ENCODE measurements at regions of chr1 and their contacts with region 1.

Region 1: DNA sequence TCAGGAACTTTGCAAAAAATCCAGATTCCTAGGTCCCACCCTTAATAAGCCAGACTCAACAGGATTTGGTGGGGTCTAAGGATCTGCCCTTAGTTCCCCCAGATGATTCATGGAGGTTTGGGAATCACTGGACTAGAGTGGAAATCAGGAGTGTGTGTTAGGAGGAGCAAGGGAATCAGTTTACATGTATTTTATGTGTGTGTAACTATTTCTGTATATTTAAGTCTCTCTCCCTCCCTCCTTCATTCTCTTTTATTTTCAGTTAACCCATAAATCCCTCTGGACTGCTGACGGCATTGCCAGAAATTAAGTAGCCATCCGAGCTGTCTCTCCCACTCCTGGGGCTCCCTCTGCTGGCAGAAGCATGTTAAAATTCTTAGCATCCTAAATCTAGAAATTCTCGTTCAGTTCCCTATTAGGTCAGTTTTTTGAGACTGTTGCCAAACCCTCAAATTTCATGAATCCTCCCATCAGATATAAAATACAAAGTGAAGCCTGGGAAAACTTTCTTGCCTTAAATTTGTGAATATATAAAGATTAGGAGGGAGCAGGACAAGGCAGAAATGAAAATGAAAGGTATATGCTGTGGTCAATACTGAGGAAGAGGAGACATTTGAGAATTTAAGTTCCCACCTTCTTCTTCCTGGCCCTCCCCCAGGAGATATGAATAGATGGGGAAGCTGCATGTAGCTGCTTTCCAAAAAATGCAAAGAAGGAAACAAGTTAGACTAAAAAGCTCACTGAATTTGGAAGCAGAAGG is 11.7 kb upstream of the HSD11B1 start:
- DNase-seq: peak; percentile 81
- ATAC-seq: peak; percentile 36 to 67

Region 2: DNA sequence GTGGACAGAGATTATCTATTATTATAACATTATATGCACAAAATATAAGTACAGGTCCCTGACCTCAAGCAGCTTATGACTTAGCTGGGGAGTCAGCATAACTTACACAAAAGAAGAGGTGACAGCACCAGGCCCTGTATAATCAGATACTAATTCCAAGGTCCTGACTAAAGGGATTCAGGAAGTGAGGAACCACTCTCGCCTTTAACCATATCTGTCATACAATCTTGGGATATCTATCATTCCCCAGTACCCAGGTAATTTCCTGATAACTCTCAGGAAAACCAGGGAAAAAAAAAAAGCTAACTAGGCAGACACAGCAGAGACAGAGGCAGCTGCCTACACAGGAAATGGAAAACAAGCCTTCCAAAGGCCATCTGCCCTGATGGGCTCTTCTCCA is 187.9 kb before region 1 on chr1:
- intact Hi-C with region 1: no loop called
- DNase-seq: no peak
- ATAC-seq: no peak

Region 3: GRCh38 chr1:209576798-209577197 is 116.1 kb before region 1 on chr1:
- intact Hi-C with region 1: loop called in 1 of 2 experiments (anchors 1 kb)
- DNase-seq: peak; percentile 82
- ATAC-seq: peak; percentile 94 to 96

Region 4: DNA sequence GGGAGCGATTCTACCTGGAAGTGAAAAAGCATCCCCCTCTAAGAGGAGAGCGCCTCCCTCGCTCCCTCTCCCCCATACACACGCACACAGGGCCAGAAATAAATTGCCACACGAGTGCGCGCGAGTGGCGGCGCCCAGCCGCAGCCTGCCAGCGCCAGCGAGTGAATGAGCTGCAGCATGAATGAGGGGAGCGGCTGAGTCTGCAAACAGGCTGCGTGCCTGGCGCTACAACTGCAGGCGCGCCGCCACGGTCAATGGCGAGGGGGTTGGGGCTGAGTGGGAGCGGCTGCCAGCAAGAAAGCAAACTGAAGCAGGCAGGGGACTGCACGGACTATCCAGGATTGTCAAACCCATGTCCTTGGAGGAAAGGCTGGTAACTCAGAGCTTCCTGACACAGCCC is 107.3 kb before region 1 on chr1:
- intact Hi-C with region 1: loop called in 1 of 2 experiments (anchors 5 kb)
- DNase-seq: peak; percentile 54
- ATAC-seq: peak; percentile 86 to 94

Region 5: DNA sequence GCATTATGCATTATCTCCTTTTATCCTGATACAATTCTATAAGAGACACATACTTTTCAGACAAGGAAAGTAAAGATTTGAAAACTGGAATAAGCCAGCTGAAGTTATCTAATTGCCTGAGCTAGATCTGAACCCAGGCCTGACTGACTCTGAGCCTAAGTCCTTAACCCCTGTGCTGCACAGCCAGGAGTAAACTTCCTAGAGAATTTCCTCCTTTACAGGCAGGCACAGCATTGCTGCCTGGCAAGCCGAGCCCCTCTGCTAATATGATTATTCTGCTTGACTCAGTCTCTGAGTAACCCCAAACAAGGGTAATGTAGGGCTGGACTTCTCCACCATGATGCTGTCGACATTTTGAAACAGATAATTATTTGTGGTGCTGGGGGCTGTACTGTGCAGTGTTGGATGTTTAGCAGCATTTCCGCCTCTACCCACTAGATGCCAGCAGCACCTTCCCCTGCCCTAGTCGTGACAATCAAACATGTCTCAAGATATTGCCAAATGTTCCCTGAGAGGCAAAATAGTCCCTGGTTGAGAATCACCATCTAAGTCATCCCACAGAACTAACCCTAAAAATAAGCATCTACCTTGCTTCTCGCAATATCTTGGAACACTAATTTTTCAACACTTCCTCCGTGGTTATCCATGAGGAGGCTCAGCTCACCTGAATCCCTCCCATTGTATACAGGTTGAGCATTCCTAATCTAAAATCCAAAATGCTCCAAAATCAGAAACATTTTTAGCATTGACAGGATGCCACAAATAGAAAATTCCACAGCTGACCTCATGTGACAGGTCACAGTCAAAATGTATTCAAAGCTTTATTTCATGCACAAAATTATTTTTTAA is 90.9 kb before region 1 on chr1:
- intact Hi-C with region 1: loop called in 1 of 2 experiments (anchors 5 kb)
- DNase-seq: no peak
- ATAC-seq: peak; percentile 93 to 94

Region 6: DNA sequence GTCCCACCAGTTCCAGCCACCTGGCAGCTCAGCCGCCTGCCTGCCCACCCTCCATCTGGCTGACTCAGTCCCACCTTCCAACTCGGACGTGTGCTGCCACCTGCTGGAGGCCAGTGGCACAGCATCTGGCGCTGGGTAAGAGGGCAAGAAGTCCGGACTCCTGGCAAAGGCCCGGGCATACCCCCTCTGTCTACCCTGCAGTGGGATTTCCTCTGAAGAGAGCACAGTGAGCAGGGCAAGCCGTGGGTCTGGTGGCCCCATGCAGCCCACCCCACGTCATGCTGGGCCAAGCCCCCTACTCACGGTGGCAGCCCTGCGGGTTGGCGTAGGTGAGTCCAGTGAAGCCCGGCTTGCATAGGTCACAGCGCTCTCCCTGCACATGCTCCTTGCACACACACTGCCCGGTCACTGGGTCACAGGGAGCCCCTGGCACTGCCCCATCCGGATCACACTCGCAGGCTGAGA is 65.2 kb before region 1 on chr1:
- intact Hi-C with region 1: loop called (anchors 5 to 10 kb)
- DNase-seq: peak; percentile 75
- ATAC-seq: peak; percentile 63 to 76

Region 7: DNA sequence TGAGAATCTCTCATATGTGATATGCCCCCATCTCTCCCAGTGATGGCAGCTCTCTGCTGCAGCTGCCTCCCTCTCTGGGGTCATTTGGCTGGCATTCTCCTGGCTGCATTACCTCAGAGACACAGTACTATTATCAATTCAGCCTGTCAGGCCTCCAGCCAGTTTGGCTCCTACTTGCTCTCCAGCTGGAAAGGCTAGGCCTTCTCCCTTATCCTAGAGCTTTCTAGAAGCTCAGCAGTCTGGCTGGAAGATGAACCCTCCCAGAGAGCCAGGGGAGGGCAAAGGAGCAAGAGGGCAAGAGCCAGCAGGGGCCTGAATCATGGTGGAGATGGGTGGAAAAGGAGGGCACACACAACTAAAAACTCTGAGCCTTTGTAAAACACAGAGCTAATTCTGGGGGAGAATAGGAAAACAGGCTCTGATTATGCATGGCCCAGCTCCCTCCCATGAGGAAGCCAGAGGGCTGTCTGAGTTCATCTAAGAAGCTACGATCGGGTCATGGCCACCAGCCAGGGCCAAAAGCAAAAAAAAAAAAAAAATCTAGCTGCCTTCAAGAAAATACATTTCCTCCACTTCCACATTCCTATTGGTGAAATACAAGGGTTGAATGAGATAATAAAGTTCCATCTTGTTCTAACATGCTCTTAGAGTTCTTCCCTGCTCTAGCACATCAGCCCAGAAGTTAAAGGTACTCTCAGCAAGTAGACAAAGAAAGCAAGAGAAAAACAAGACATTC is 49.5 kb before region 1 on chr1:
- intact Hi-C with region 1: loop called in 1 of 2 experiments (anchors 5 kb)
- DNase-seq: peak; percentile 75
- ATAC-seq: peak; percentile 73 to 75

Region 8: DNA sequence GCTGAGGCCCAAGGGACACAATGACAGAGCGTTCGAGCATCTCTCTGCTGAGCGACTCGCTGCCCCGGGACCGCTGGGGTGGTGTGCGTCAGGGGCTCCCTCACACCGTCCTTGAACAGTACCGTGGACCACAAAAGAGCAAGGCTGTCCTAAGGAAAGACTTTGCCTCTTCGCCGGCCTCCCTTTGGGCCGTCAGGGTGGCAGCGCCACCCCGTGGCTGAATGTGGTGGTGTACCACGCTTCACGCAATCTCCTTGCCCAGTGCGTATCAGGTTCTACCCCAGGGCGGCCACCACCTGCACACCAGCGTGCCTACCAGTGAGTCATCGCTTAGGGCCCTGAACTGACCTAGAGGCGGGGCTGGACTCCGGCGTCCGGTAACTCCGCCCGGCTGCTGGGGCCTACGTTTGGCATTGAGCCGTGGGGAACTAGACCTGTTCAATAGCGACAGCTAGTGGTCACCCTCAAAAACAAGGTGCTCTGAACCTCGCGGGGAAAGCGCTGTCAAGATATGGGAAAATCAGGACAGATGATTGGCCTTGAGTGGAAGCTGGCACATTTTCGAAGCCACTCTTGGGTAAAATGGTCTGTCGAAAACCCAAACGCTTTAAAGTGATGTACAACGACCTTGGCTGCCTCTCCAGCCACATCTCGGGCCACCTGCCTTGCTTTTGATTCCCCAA is 54.8 kb after region 1 on chr1:
- intact Hi-C with region 1: loop called (anchors 2 to 5 kb)
- DNase-seq: peak; percentile 94
- ATAC-seq: peak; percentile 96 to 99